OCI-LY7 (cell line): ENCODE measurements at regions of chr1 and their contacts with region 1.

Region 1: GRCh38 chr1:199123615-199124014 is 484.8 kb downstream of the PTPRC start:
- DNase-seq: no peak
- H3K4me3 ChIP-seq: no peak overlapping the region
- H3K27ac ChIP-seq: no peak overlapping the region
- H3K4me1 ChIP-seq: no peaks in the 10 kb centered on the region
- CTCF ChIP-seq: no peak

Region 2: GRCh38 chr1:199529324-199529723 is 405.7 kb after region 1 on chr1:
- CTCF ChIA-PET with region 1: no interaction called
- POLR2A ChIA-PET with region 1: no interaction called
- intact Hi-C with region 1: loop called (anchors 10 kb)
- DNase-seq: no peak
- H3K4me3 ChIP-seq: no peak overlapping the region
- H3K27ac ChIP-seq: no peak overlapping the region
- H3K4me1 ChIP-seq: no peaks in the 10 kb centered on the region
- CTCF ChIP-seq: no peak